ENCODE measurements at regions of chr12 and their contacts with region 1.

Region 1: GRCh38 chr12:82740129-82741000 is 53.7 kb downstream of the TMTC2 start:
- DNase-seq: peak; percentile 48 to 72
- ATAC-seq: peak; percentile 89 to 95; a peak in 5 of 6 replicates
- H3K4me3 ChIP-seq: no peak overlapping the region
- H3K27ac ChIP-seq: peak overlapping the region; percentile 57 to 77
- H3K4me1 ChIP-seq: peaks cover 18% of the 10 kb centered on the region
- CTCF ChIP-seq: no peak
- EP300 ChIP-seq: no peak
- POLR2A ChIP-seq: no peak
- RAD21 ChIP-seq: no peak

Region 2: DNA sequence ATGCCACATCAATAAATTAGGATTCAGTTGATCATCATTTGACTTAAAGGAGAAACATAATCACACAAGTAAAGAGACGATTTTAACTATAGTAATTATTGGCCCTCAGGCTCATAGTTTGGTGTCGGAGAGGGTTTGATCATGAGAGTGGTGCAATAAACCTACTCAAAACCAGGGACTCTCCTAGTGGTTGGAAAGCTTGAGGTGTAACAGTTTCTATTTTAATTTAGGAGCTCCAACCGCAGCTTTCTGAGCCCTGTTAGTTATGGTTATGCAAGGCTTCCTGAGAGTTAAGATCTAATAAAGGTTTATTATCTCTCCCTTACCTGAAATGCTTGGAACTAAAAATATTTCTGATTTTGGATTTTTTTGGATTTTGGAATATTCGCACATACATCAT is 17.3 kb before region 1 on chr12:
- CTCF ChIA-PET with region 1: no interaction called
- POLR2A ChIA-PET with region 1: no interaction called
- DNase-seq: no peak
- ATAC-seq: no peak
- H3K4me3 ChIP-seq: no peak overlapping the region
- H3K27ac ChIP-seq: no peak overlapping the region
- H3K4me1 ChIP-seq: no peaks in the 10 kb centered on the region
- CTCF ChIP-seq: no peak
- EP300 ChIP-seq: no peak
- POLR2A ChIP-seq: no peak
- RAD21 ChIP-seq: no peak

Region 3: DNA sequence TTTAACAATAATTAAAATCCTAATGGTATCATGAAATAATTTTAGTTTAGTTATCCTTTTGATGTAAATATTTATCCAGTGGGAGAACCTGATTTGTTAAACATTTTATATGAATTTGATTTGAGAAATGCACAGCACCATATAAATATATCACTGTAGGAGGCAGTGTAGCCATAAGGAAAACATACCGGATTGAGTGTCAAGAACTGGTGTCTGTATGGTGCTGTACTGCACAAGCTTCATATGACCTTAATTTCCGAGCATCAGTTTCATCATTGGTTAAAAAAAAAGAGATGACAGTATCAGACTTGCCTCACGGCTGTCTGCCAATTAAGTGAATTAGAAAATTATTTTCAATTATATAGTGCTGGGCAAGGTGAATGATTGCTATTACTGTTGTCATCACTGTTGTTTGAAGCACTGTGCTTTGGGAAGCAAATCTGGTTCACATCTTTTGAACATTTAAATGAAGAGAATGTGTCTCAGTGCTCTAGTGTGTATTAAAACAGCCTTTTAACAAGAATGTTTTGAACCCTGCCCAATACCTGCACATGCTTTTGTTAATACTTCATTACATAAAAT is 18.5 kb after region 1 on chr12:
- CTCF ChIA-PET with region 1: interaction called, 11 read pairs
- POLR2A ChIA-PET with region 1: no interaction called
- DNase-seq: peak in 1 of 2 experiments; percentile 12
- ATAC-seq: no peak
- H3K4me3 ChIP-seq: no peak overlapping the region
- H3K27ac ChIP-seq: no peak overlapping the region
- H3K4me1 ChIP-seq: no peaks in the 10 kb centered on the region
- CTCF ChIP-seq: no peak
- EP300 ChIP-seq: no peak
- POLR2A ChIP-seq: no peak
- RAD21 ChIP-seq: peak in 1 of 2 experiments; percentile 26; a peak in 1 of 5 replicates

Measured in A549 (cell line).